CD4-positive, alpha-beta memory T cell (primary cell): ENCODE measurements at regions of chr1 and their contacts with region 1.

Region 1: DNA sequence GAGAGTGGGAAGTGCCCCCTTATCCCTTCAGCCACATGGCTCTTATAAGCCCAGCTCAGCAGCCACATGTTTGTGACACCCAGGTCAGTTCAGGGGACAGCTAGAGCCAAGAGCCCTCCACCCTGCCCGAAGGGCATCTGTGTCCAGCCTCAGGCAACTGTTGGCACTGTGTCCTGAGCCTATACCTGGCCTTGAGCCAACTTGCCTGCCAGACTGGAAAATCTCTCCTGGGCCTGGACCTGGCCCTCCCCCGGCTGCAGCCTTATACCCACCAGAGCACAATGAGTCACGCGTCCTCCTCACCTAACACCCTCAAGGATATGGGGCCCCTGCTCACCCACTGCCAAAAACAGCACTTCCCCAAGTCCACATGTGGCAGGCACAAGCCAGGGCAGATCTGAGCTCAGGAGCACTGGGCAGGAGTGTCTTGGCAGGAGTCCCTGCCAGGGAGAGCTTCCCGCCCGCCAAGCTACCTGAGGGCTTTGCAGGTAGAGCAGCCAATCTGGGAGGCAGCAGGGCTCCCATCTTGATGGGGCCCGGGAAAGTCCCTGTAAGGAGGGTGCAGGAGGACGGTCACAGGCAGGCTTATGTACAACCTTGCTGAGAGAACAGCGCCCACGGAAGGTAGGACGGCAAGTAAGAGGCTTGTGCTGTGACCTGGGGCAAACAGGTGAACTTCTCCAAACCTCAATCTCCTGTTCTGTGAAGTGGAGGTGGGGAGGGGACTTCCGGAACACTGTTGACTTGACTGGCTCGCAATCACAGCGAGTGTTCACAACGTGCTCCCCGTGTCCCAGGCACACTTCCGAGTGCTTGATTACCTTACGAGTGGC is 19.8 kb upstream of the HSPG2 start:
- DNase-seq: peak; percentile 64 to 84 (median 73)
- H3K4me3 ChIP-seq: no peak overlapping the region
- H3K4me3 Mint-ChIP-seq: peak overlapping the region; percentile 59 to 91 (median 73)
- H3K27ac ChIP-seq: peak overlapping the region; percentile 33
- H3K27ac Mint-ChIP-seq: peak overlapping the region; percentile 79 to 96 (median 91)
- H3K4me1 ChIP-seq: peaks cover 31% of the 10 kb centered on the region
- H3K4me1 Mint-ChIP-seq: peaks cover 20 to 42% (median 25%) of the 10 kb centered on the region in 4 donors
- H3K27me3 ChIP-seq: no peaks in the 10 kb centered on the region
- H3K27me3 Mint-ChIP-seq: peaks cover 0 to 1% of the 10 kb centered on the region in 2 donors

Region 2: GRCh38 chr1:21782868-21783678 is 173.9 kb before region 1 on chr1 and contains the start of gene USP48:
- CTCF ChIA-PET with region 1: interaction called, 3 read pairs
- POLR2A ChIA-PET with region 1: interaction called, 19 read pairs
- intact Hi-C with region 1: no loop called
- DNase-seq: peak; percentile 97 to 98 (median 97)
- H3K4me3 ChIP-seq: peak within 1 kb of the TSS; percentile 47 to 97
- H3K4me3 Mint-ChIP-seq: peak within 1 kb of the TSS; percentile 92 to 99 (median 97)
- H3K27ac ChIP-seq: peak within 1 kb of the TSS; percentile 99
- H3K27ac Mint-ChIP-seq: peak within 1 kb of the TSS; percentile 100
- H3K4me1 ChIP-seq: peaks cover 37% of the 10 kb centered on the region
- H3K4me1 Mint-ChIP-seq: peaks cover 22 to 44% (median 33%) of the 10 kb centered on the region in 4 donors
- H3K27me3 ChIP-seq: no peaks in the 10 kb centered on the region
- H3K27me3 Mint-ChIP-seq: peaks cover 0 to 3% of the 10 kb centered on the region in 2 donors
- total RNA-seq, gene USP48: 110 to 117 TPM

Region 3: GRCh38 chr1:21937372-21938221 is 19.3 kb before region 1 on chr1:
- CTCF ChIA-PET with region 1: interaction called, 3 read pairs
- POLR2A ChIA-PET with region 1: interaction called, 14 read pairs
- intact Hi-C with region 1: no loop called
- DNase-seq: peak; percentile 55 to 68 (median 58)
- H3K4me3 ChIP-seq: peak overlapping the region in 1 of 2 donors; percentile 49
- H3K4me3 Mint-ChIP-seq: peak overlapping the region; percentile 84 to 97 (median 90)
- H3K27ac ChIP-seq: no peak overlapping the region
- H3K27ac Mint-ChIP-seq: peak overlapping the region in 6 of 7 donors; percentile 64 to 93 (median 84)
- H3K4me1 ChIP-seq: peaks cover 12% of the 10 kb centered on the region
- H3K4me1 Mint-ChIP-seq: peaks cover 6 to 26% (median 8%) of the 10 kb centered on the region in 4 donors
- H3K27me3 ChIP-seq: no peaks in the 10 kb centered on the region
- H3K27me3 Mint-ChIP-seq: peaks cover 4 to 5% of the 10 kb centered on the region in 2 donors